ENCODE measurements at regions of chr5 and their contacts with region 1.

Region 1: GRCh38 chr5:34486160-34486848 is 169.8 kb upstream of the RAI14 start:
- DNase-seq: peak; percentile 89
- H3K4me3 ChIP-seq: no peak overlapping the region
- H3K27ac ChIP-seq: peak overlapping the region; percentile 76 to 90
- H3K4me1 ChIP-seq: peaks cover 18% of the 10 kb centered on the region
- H3K27me3 ChIP-seq: no peaks in the 10 kb centered on the region
- CTCF ChIP-seq: peak; percentile 83 to 91 (median 85)
- POLR2A ChIP-seq: no peak

Region 2: GRCh38 chr5:33745101-33745770 is 741.1 kb before region 1 on chr5:
- intact Hi-C with region 1: no loop called
- DNase-seq: no peak
- H3K4me3 ChIP-seq: no peak overlapping the region
- H3K27ac ChIP-seq: no peak overlapping the region
- H3K4me1 ChIP-seq: no peaks in the 10 kb centered on the region
- H3K27me3 ChIP-seq: no peaks in the 10 kb centered on the region
- CTCF ChIP-seq: no peak
- POLR2A ChIP-seq: no peak

Region 3: GRCh38 chr5:34522599-34523386 is 36.5 kb after region 1 on chr5:
- intact Hi-C with region 1: loop called (anchors 5 kb)
- DNase-seq: peak; percentile 82
- H3K4me3 ChIP-seq: no peak overlapping the region
- H3K27ac ChIP-seq: no peak overlapping the region
- H3K4me1 ChIP-seq: no peaks in the 10 kb centered on the region
- H3K27me3 ChIP-seq: no peaks in the 10 kb centered on the region
- CTCF ChIP-seq: peak; percentile 43 to 84 (median 78)
- POLR2A ChIP-seq: no peak

Region 4: DNA sequence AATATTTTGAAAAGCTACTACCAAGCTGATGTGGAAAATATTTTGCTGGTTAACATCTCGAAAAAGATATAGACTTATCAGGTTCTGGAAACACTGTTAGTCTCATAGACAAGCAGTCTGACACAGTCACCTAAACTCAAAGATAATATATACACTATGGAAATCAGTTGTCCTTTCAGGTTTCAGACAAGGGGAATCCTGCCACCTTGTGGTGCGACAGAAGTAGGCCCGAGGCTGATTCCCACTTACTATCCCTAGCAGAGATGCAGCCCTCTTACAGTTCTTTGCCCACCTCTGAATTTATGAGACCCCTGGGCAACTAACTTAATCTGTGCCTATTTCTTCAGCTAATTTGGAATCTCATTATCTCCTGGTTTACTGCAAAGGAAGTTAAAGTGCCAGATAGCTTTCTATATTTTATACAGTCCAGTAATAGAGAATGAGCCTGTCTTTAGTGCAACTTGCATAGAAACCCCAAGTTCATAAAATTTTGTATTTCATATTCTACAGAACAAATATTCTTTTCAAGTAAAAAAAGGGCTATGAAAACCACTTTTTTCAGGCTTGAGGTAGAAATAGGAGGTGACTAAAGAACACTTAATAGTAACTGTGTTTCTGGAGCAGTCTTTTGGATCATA is 412.1 kb after region 1 on chr5:
- intact Hi-C with region 1: loop called (anchors 1 kb)
- DNase-seq: peak; percentile 71
- H3K4me3 ChIP-seq: no peak overlapping the region
- H3K27ac ChIP-seq: no peak overlapping the region
- H3K4me1 ChIP-seq: no peaks in the 10 kb centered on the region
- H3K27me3 ChIP-seq: no peaks in the 10 kb centered on the region
- CTCF ChIP-seq: peak; percentile 77 to 92 (median 84)
- POLR2A ChIP-seq: no peak

Region 5: GRCh38 chr5:35598707-35599370 is 1112.5 kb after region 1 on chr5:
- intact Hi-C with region 1: no loop called
- DNase-seq: no peak
- H3K4me3 ChIP-seq: no peak overlapping the region
- H3K27ac ChIP-seq: no peak overlapping the region
- H3K4me1 ChIP-seq: no peaks in the 10 kb centered on the region
- H3K27me3 ChIP-seq: no peaks in the 10 kb centered on the region
- CTCF ChIP-seq: no peak
- POLR2A ChIP-seq: no peak

Measured in prostate gland (tissue), 2 donors.